Mucosa of descending colon (tissue), 3 donors: ENCODE measurements at regions of chr3 and their contacts with region 1.

Region 1: DNA sequence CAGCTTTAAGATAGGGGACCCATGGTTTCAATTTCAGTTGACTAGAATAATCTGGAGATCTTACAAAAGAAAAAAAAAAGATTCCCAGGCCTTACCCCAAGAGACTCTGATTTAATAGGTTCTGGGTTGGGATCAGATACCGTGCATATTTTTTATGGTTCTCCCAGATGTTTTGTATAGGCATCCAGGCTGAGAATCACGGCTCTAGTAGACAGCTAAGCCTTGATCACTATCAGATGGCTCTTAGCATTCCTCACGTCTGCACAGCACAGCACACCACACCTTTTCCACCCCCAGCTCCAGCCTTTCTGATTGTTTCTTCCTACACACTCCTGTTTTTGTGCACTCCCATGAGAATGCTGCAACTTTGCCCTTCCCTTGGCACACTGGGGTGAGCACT is 40.8 kb downstream of the TMEM45A start:
- DNase-seq: no peak
- ATAC-seq: no peak
- H3K4me3 ChIP-seq: no peak overlapping the region
- H3K4me1 ChIP-seq: no peaks in the 10 kb centered on the region
- CTCF ChIP-seq: no peak

Region 2: GRCh38 chr3:100277255-100277800 is 255.8 kb before region 1 on chr3:
- intact Hi-C with region 1: no loop called
- DNase-seq: no peak
- ATAC-seq: no peak
- H3K4me3 ChIP-seq: no peak overlapping the region
- H3K4me1 ChIP-seq: no peaks in the 10 kb centered on the region
- CTCF ChIP-seq: no peak

Region 3: GRCh38 chr3:100449214-100449613 is 84.0 kb before region 1 on chr3:
- intact Hi-C with region 1: loop called in 1 of 2 experiments (anchors 5 kb)
- DNase-seq: no peak
- ATAC-seq: no peak
- H3K4me3 ChIP-seq: no peak overlapping the region
- H3K4me1 ChIP-seq: no peaks in the 10 kb centered on the region
- CTCF ChIP-seq: no peak